ENCODE measurements at regions of chr13 and their contacts with region 1.

Region 1: GRCh38 chr13:91078093-91078679 is 269.3 kb upstream of the MIR17HG start:
- DNase-seq: no peak
- CTCF ChIP-seq: peak; percentile 33

Region 2: DNA sequence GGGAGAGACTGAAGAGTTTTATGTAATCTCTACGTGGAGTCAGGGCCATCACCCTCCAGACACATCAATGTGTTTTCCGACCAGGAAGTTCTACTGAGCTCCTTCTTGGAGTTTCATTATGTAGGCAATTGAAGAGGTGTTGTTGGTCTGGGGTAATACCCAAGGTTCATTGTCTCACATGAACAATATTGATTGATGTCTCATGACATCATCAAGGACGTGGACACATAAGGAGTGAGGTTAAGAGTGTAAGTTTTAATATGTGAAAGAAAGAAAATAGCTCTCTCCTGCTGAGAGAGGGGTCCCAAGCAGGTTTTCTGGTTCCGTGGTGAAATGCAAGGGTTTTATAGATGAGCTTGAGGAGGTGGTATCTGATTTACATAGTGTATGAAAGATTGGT is 11.4 kb before region 1 on chr13:
- CTCF ChIA-PET with region 1: interaction called, 10 read pairs
- POLR2A ChIA-PET with region 1: no interaction called
- DNase-seq: no peak
- CTCF ChIP-seq: no peak

Region 3: GRCh38 chr13:91101381-91101780 is 23.2 kb after region 1 on chr13:
- CTCF ChIA-PET with region 1: no interaction called
- POLR2A ChIA-PET with region 1: no interaction called
- DNase-seq: no peak
- CTCF ChIP-seq: no peak